Activated CD8-positive, alpha-beta T cell treated with anti-CD3 and anti-CD28 coated beads for 36 hours (primary cell): ENCODE measurements at regions of chr6 and their contacts with region 1.

Region 1: DNA sequence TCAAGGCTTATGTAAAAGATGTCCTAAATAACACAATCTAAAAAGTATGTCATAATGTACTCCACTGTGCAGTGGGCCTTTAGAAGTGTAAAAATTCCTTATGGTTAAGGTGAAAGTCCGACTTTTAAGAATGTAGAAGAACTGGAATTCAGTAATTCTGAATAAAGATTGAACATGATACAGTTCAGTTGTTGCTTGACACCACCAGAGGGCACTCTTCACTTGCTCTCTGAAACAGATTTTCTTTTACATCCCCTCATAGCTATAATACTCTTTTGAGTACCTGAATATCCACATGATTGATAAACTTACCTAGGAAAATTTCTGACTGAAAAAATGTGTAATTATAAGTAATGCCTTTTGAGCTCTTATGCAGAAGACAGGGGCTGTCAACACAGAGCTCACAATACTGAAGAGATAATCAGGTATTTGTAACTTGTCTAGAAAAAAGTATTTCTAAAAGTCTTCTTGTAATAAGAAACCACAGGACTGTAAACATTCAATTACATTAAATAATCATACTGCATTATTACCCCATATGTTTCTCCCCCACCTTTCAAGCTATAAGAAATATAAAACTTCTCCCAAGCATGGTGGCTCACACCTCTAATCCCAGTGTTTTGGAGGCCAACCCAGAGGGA is 92.1 kb downstream of the POPDC3 start:
- DNase-seq: peak; percentile 49
- ATAC-seq: peak; percentile 30
- H3K4me3 Mint-ChIP-seq: no peak overlapping the region
- H3K27ac Mint-ChIP-seq: no peak overlapping the region
- H3K4me1 Mint-ChIP-seq: no peaks in the 10 kb centered on the region
- H3K27me3 Mint-ChIP-seq: peaks cover 4% of the 10 kb centered on the region
- CTCF ChIP-seq: peak; percentile 93

Region 2: GRCh38 chr6:104959026-104959858 is 128.4 kb before region 1 on chr6:
- CTCF ChIA-PET with region 1: no interaction called
- POLR2A ChIA-PET with region 1: no interaction called
- intact Hi-C with region 1: no loop called
- DNase-seq: no peak
- ATAC-seq: no peak
- H3K4me3 Mint-ChIP-seq: no peak overlapping the region
- H3K27ac Mint-ChIP-seq: no peak overlapping the region
- H3K4me1 Mint-ChIP-seq: peaks cover 12% of the 10 kb centered on the region
- H3K27me3 Mint-ChIP-seq: peaks cover 46% of the 10 kb centered on the region
- CTCF ChIP-seq: no peak

Region 3: GRCh38 chr6:105112577-105112976 is 24.9 kb after region 1 on chr6:
- CTCF ChIA-PET with region 1: interaction called, 10 read pairs
- POLR2A ChIA-PET with region 1: no interaction called
- intact Hi-C with region 1: no loop called
- DNase-seq: no peak
- ATAC-seq: no peak
- H3K4me3 Mint-ChIP-seq: no peak overlapping the region
- H3K27ac Mint-ChIP-seq: no peak overlapping the region
- H3K4me1 Mint-ChIP-seq: no peaks in the 10 kb centered on the region
- H3K27me3 Mint-ChIP-seq: peaks cover 19% of the 10 kb centered on the region
- CTCF ChIP-seq: no peak

Region 4: DNA sequence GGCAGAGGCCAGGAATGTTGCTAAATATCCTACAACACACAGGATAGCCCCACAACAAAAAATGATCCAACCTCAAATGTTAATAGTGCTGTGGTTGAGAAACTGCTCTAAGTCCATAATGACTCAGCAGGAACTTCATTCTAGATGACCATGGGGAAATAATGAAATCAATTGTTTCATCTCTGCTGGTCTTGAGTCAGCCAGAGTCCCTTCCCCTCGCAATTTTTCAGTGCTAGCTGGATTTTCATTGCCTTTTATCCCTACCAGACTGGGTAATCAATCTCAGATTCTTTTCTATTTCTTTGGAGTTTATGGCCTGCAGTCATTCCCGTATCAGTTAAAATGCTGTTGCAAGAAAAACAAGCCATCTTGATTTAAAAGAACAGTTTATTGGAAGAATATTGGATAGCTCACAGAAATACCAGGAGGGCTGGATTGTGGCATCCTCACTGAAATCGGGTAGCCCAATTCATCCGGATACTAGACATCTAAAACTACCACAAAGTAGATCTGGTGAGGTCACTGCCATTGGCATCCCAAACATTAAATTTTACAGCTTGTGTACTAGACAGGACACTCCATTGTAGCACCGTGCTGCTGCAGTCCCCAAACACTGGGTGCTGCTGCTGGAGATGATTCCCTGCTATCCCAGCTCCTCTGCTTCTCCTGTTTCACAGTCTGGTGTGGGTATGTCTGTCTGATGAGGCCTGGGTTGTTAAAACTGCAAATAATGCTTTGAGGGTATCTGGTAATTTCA is 122.4 kb after region 1 on chr6:
- CTCF ChIA-PET with region 1: no interaction called
- POLR2A ChIA-PET with region 1: no interaction called
- intact Hi-C with region 1: no loop called
- DNase-seq: no peak
- ATAC-seq: no peak
- H3K4me3 Mint-ChIP-seq: no peak overlapping the region
- H3K27ac Mint-ChIP-seq: no peak overlapping the region
- H3K4me1 Mint-ChIP-seq: peaks cover 7% of the 10 kb centered on the region
- H3K27me3 Mint-ChIP-seq: peaks cover 11% of the 10 kb centered on the region
- CTCF ChIP-seq: no peak

Region 5: GRCh38 chr6:105363100-105363754 is 275.5 kb after region 1 on chr6:
- CTCF ChIA-PET with region 1: interaction called, 12 read pairs
- POLR2A ChIA-PET with region 1: no interaction called
- intact Hi-C with region 1: no loop called
- DNase-seq: no peak
- ATAC-seq: no peak
- H3K4me3 Mint-ChIP-seq: no peak overlapping the region
- H3K27ac Mint-ChIP-seq: peak overlapping the region; percentile 5
- H3K4me1 Mint-ChIP-seq: peaks cover 8% of the 10 kb centered on the region
- H3K27me3 Mint-ChIP-seq: no peaks in the 10 kb centered on the region
- CTCF ChIP-seq: no peak

Region 6: DNA sequence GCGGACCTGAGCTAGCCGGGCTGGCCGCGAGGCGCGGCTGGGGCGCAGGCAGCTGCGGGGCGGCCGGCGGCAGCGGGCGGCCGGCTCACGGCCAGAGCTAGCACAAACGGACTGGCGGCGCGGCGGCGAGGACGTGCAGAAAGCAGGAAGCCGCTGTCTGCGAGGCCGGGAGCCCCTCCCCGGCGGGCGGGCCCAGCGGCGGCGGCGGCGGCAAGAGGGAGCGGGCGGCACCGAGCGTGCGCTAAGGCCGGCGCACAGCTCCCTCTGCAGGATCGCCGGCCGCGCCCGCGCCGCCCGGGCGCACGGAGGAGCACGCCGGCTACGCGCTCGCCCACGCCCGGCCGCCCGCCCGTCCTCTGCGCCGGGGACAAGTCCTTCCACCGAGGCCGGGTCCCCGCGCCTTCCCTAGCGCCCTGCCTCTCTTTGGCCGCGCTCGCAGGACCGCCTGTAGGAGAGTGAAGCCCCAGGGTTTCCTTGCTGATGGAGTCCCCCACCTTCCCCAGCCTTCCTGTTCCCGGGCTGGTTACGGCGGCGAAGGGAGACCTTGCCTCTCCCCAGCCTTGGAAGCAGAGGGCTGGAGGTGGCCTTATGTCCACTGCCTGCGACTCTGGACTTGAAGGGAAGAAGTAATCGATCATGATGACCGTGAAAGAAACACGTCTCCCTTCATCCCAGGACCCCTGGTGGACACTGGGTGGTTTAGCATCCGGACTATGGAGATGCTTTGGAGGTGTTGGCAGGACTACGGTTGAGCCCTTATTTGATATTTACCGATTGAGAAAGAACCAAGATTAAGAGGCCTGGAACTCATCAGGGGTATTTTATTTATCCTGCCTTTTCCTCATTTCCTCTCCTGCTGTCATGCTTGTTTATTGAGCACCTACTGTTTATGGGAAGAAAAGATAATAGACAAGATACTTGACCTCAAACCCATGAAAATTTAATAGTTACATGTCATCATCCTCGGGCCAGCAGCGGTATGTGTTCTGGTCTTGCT is 315.5 kb after region 1 on chr6 and contains the start of gene PREP:
- CTCF ChIA-PET with region 1: interaction called, 25 read pairs
- POLR2A ChIA-PET with region 1: no interaction called
- intact Hi-C with region 1: loop called (anchors 5 kb)
- DNase-seq: peak; percentile 84
- ATAC-seq: peak; percentile 95
- H3K4me3 Mint-ChIP-seq: peak within 1 kb of the TSS; percentile 84
- H3K27ac Mint-ChIP-seq: peak within 1 kb of the TSS; percentile 79
- H3K4me1 Mint-ChIP-seq: peaks cover 56% of the 10 kb centered on the region
- H3K27me3 Mint-ChIP-seq: peaks cover 3% of the 10 kb centered on the region
- CTCF ChIP-seq: peak; percentile 80
- total RNA-seq, gene PREP: 46.4 to 46.9 TPM

Region 7: GRCh38 chr6:105424175-105424783 is 336.6 kb after region 1 on chr6:
- CTCF ChIA-PET with region 1: interaction called, 21 read pairs
- POLR2A ChIA-PET with region 1: no interaction called
- intact Hi-C with region 1: loop called (anchors 1 kb)
- DNase-seq: peak; percentile 76
- ATAC-seq: peak; percentile 77
- H3K4me3 Mint-ChIP-seq: no peak overlapping the region
- H3K27ac Mint-ChIP-seq: no peak overlapping the region
- H3K4me1 Mint-ChIP-seq: no peaks in the 10 kb centered on the region
- H3K27me3 Mint-ChIP-seq: peaks cover 1% of the 10 kb centered on the region
- CTCF ChIP-seq: peak; percentile 48

Region 8: GRCh38 chr6:105431226-105431625 is 343.5 kb after region 1 on chr6:
- CTCF ChIA-PET with region 1: interaction called, 12 read pairs
- POLR2A ChIA-PET with region 1: no interaction called
- intact Hi-C with region 1: no loop called
- DNase-seq: no peak
- ATAC-seq: no peak
- H3K4me3 Mint-ChIP-seq: no peak overlapping the region
- H3K27ac Mint-ChIP-seq: no peak overlapping the region
- H3K4me1 Mint-ChIP-seq: peaks cover 2% of the 10 kb centered on the region
- H3K27me3 Mint-ChIP-seq: peaks cover 3% of the 10 kb centered on the region
- CTCF ChIP-seq: peak; percentile 81